ENCODE measurements at regions of chr6 and their contacts with region 1.

Region 1: GRCh38 chr6:30102970-30103874 is 9.7 kb downstream of the TRIM31 start:
- DNase-seq: peak; percentile 86 to 92 (median 91)
- H3K4me3 ChIP-seq: peak overlapping the region; percentile 0 to 72 (median 47)
- H3K27ac ChIP-seq: no peak overlapping the region
- H3K4me1 ChIP-seq: peaks cover 9 to 36% (median 35%) of the 10 kb centered on the region in 4 experiments
- H3K27me3 ChIP-seq: peaks cover 4 to 76% (median 45%) of the 10 kb centered on the region in 5 experiments

Region 2: DNA sequence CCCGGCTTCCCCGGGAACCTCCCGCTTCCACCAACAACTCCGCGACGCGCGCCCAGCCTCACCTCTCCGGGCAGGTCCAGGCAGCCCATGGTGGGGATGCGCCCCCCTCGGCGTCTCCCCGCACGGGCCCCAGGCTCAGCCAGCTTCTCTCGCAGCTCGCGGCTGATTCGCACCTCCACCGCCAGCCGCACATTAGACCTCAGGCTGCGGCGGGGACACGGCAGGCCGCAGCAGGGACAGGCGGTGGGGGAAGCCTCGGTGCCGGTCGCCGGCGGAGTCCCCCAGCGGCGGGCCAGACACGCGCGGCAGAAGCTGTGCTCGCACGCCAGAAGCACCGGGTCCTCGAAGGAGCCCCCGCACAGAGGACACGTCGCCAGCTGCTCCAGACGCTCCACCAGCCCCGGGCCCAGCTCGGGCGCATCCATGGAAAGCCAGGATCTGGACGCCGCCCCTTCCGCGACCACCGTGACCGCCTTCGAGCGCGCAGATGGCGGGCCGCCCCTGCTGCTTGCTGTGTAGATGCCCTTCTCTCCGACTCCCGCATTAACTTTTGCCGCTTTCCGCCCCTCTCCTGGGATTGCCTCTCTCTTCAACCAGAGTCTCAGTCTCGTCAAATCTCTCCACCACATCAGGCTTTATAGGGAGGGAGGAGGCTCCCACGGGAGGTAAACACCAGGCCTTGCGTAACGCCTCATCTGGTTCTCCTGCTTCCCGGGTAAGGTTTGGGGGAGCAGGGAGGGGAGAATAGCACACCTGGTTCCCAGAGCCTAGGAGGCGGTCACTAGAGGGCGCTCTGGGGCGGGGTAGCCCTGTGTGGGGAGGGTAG is 27.8 kb before region 1 on chr6 and contains the start of gene RNF39:
- CTCF ChIA-PET with region 1: interaction called, 10 read pairs
- POLR2A ChIA-PET with region 1: no interaction called
- DNase-seq: peak in 2 of 3 donors; percentile 48 to 61
- H3K4me3 ChIP-seq: peak within 1 kb of the TSS in 4 of 7 experiments; percentile 16 to 64 (median 56)
- H3K27ac ChIP-seq: no peak within 1 kb of the TSS
- H3K4me1 ChIP-seq: peaks cover 0 to 32% (median 21%) of the 10 kb centered on the region in 4 experiments
- H3K27me3 ChIP-seq: peaks cover 14 to 95% (median 58%) of the 10 kb centered on the region in 5 experiments

Region 3: DNA sequence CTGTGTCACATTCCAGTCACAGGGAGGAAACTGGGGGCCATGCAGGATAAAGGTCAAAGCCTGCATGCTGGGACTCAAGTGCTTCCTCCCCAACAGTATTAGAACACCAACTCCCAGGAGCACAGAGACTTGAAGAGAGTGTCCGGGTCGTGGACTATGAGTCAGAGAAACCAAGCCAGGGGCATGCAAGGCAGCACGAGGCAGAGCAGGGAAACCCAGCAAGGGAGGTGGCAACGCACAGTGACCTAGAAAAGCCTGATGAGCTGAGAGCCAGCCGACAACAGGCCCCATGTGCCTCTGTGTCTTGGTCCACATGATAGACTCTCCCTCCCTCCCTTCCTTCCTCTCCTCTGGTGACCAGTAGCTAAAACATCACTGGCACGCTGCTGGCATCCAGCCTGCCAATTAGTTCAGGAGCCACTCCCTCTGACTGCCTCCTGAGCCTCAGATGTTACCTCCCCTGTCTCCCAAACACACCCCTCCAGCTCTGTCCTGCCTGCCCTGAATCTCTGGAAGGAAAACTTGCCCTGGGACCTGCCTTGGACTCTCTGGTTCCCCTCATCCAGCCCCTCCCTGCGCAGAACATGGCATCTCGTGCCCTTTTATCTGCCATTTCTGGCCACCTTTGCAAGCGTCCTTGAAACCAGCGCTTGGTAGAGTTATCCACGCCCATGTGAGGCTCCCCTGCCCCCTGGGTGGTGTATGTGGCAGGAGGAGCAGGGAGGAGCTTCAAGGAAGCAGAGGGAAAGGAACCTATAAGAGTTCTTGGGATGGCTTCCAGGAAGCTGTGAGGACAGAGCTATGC is 11.4 kb before region 1 on chr6:
- CTCF ChIA-PET with region 1: interaction called, 17 read pairs
- POLR2A ChIA-PET with region 1: no interaction called
- DNase-seq: no peak
- H3K4me3 ChIP-seq: no peak overlapping the region
- H3K27ac ChIP-seq: no peak overlapping the region
- H3K4me1 ChIP-seq: no peaks in the 10 kb centered on the region
- H3K27me3 ChIP-seq: peaks cover 2 to 70% (median 28%) of the 10 kb centered on the region in 5 experiments

Region 4: GRCh38 chr6:30130887-30131862 is 28.0 kb after region 1 on chr6:
- CTCF ChIA-PET with region 1: interaction called, 108 read pairs
- POLR2A ChIA-PET with region 1: no interaction called
- DNase-seq: peak; percentile 87 to 92 (median 91)
- H3K4me3 ChIP-seq: peak overlapping the region in 1 of 7 experiments; percentile 14
- H3K27ac ChIP-seq: no peak overlapping the region
- H3K4me1 ChIP-seq: peaks cover 0 to 14% (median 5%) of the 10 kb centered on the region in 4 experiments
- H3K27me3 ChIP-seq: peaks cover 15 to 60% (median 37%) of the 10 kb centered on the region in 5 experiments

Region 5: GRCh38 chr6:30169658-30170614 is 66.7 kb after region 1 on chr6:
- CTCF ChIA-PET with region 1: interaction called, 27 read pairs
- POLR2A ChIA-PET with region 1: no interaction called
- DNase-seq: peak; percentile 74 to 87 (median 80)
- H3K4me3 ChIP-seq: no peak overlapping the region
- H3K27ac ChIP-seq: no peak overlapping the region
- H3K4me1 ChIP-seq: peaks cover 3 to 32% (median 24%) of the 10 kb centered on the region in 4 experiments
- H3K27me3 ChIP-seq: peaks cover 3 to 45% (median 22%) of the 10 kb centered on the region in 5 experiments

Region 6: GRCh38 chr6:30219244-30219643 is 116.0 kb after region 1 on chr6:
- CTCF ChIA-PET with region 1: interaction called, 10 read pairs
- POLR2A ChIA-PET with region 1: no interaction called
- DNase-seq: peak; percentile 61 to 73 (median 64)
- H3K4me3 ChIP-seq: no peak overlapping the region
- H3K27ac ChIP-seq: no peak overlapping the region
- H3K4me1 ChIP-seq: peaks cover 0 to 7% (median 6%) of the 10 kb centered on the region in 4 experiments
- H3K27me3 ChIP-seq: peaks cover 0 to 3% (median 0%) of the 10 kb centered on the region in 5 experiments

Measured in common myeloid progenitor, CD34-positive (primary cell).